OCI-LY7 (cell line): ENCODE measurements at regions of chr3 and their contacts with region 1.

Region 1: GRCh38 chr3:138915503-138916498 is 31.1 kb downstream of the FOXL2 start:
- DNase-seq: peak; percentile 93
- H3K4me3 ChIP-seq: peak overlapping the region; percentile 71
- H3K27ac ChIP-seq: peak overlapping the region; percentile 41
- H3K4me1 ChIP-seq: peaks cover 4% of the 10 kb centered on the region
- CTCF ChIP-seq: peak; percentile 75

Region 2: DNA sequence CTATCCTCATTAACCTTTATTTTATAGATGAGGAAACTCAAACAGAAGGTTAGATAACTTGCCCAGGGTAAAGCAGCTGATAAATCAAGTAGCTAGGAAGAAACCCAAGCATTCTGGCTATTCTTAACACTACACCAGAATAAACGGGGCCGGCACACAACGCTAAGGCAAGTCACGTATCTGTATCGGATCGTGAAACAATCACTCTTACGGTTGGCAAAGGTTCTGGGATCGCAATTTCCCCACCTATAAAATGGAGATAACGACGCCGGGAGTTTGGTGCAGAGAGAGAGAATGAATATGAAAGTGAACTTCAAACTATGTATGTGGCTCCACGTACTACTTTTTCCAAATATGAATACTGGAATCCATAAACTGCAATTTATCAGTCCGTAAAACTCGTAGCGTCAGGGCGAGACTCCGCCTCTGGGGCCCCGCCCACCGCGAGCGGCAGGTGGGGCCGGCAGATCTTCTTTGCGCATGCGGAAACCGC is 729.0 kb before region 1 on chr3:
- CTCF ChIA-PET with region 1: no interaction called
- POLR2A ChIA-PET with region 1: no interaction called
- intact Hi-C with region 1: loop called (anchors 5 kb)
- DNase-seq: peak; percentile 92
- H3K4me3 ChIP-seq: peak overlapping the region; percentile 96
- H3K27ac ChIP-seq: peak overlapping the region; percentile 52
- H3K4me1 ChIP-seq: peaks cover 23% of the 10 kb centered on the region
- CTCF ChIP-seq: no peak

Region 3: DNA sequence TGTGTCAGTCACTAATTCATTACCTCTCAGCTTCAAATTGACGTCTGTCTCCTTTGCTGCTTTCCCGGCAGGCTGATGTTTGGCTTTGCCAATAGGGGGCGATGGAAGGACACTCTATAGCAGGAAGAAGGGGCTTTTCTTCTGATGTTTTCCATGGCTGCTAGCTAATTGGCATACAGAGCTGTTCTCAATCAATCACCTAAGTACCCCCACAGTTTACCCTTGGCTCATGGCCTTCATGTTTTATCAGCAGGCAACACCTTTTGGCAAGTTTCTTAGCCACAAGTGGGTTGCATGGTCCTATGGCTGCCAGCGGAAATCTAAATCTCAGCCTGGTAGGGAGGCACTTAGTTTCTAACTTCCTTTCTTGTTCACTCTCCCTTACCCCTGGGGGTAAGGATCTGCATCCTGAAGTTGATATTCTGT is 436.4 kb before region 1 on chr3:
- CTCF ChIA-PET with region 1: interaction called, 15 read pairs
- POLR2A ChIA-PET with region 1: interaction called, 7 read pairs
- intact Hi-C with region 1: loop called (anchors 1 kb)
- DNase-seq: peak; percentile 70
- H3K4me3 ChIP-seq: no peak overlapping the region
- H3K27ac ChIP-seq: no peak overlapping the region
- H3K4me1 ChIP-seq: no peaks in the 10 kb centered on the region
- CTCF ChIP-seq: peak; percentile 89

Region 4: DNA sequence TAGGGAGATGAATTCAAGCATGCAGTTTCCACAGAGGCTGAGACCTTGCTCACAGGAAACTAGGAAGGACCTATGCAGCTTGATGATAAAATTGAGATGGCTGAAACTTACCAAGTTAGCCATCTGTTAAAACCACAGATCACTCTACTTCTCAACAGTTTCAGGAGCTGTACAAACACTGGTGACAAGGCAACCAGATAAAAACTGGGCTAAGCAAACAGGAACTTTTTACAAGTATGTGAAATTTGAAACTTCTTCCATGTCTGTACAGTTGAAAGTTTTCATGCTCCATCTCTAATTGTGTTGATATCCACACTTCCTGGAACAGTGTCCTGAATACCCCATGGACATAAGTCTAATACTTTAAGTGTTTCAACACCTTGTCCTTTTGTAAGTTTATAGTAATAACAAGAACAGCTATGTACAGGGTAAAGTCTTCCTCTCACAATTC is 229.0 kb before region 1 on chr3:
- CTCF ChIA-PET with region 1: interaction called, 26 read pairs
- POLR2A ChIA-PET with region 1: interaction called, 3 read pairs
- intact Hi-C with region 1: loop called (anchors 1 kb)
- DNase-seq: peak; percentile 61
- H3K4me3 ChIP-seq: no peak overlapping the region
- H3K27ac ChIP-seq: peak overlapping the region; percentile 48
- H3K4me1 ChIP-seq: peaks cover 15% of the 10 kb centered on the region
- CTCF ChIP-seq: no peak